ENCODE measurements at regions of chr6 and their contacts with region 1.

Region 1: GRCh38 chr6:125363039-125363823 is 61.5 kb upstream of the HDDC2 start:
- DNase-seq: peak; percentile 82
- H3K4me3 ChIP-seq: peak overlapping the region; percentile 40 to 56 (median 49)
- H3K27ac ChIP-seq: peak overlapping the region; percentile 57 to 87 (median 76)
- H3K4me1 ChIP-seq: peaks cover 0 to 33% (median 19%) of the 10 kb centered on the region in 4 donors
- H3K27me3 ChIP-seq: no peaks in the 10 kb centered on the region
- CTCF ChIP-seq: no peak
- EP300 ChIP-seq: no peak
- POLR2A ChIP-seq: no peak

Region 2: DNA sequence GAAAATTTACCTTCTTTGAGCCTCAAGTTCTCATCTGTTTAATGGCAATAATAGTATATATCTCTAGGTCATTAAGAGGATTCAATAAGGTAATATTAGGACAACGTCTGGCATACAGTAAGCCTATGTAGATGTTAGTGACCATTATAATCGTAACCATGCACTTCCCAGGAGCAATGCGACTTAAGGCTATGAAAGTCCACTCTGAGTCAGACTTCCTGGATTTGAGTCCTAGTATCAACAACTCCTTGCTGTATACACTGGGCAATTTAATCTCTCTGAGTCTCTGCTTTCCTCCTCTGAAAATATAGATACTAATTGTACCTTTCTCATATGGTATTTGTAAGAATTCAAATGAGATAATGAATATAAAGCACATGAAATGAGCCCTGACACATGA is 106.7 kb after region 1 on chr6:
- intact Hi-C with region 1: no loop called
- DNase-seq: no peak
- H3K4me3 ChIP-seq: no peak overlapping the region
- H3K27ac ChIP-seq: no peak overlapping the region
- H3K4me1 ChIP-seq: no peaks in the 10 kb centered on the region
- H3K27me3 ChIP-seq: no peaks in the 10 kb centered on the region
- CTCF ChIP-seq: no peak
- EP300 ChIP-seq: no peak
- POLR2A ChIP-seq: no peak

Region 3: DNA sequence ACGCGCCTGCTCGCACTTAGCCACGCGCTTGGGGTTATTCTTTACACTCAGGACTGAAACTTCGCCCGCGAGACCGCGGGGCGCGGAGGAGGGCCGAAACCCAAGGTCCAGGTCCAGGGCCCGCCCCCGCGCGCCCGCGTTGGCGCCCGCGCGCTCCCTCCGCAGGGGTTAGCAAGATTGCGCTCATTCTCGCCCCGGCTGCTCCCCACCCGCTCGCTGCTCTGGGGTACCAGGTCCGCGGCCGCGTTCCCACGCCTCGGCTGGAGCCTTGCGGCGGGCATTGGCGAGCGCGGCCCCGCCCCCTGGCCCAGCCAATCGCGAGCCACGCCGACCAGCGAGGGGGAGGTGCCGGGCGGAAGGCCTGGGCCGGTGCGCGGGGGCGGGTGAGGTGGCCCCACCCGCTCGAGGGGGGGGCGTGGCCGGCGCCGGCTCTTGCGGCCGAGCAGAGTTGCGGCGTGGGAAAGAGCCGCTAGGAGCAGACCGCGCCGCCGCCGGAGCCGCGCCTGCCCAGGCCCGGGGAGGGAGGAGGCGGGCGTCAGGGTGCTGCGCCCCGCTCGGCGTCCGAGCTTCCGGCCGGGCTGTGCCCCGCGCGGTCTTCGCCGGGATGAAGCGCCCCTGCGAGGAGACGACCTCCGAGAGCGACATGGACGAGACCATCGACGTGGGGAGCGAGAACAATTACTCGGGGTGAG is 386.1 kb after region 1 on chr6 and contains the start of gene HEY2:
- intact Hi-C with region 1: loop called (anchors 5 kb)
- DNase-seq: peak; percentile 96
- H3K4me3 ChIP-seq: peak within 1 kb of the TSS; percentile 53 to 74 (median 70)
- H3K27ac ChIP-seq: peak within 1 kb of the TSS; percentile 86 to 89 (median 88)
- H3K4me1 ChIP-seq: peaks cover 0 to 33% (median 21%) of the 10 kb centered on the region in 4 donors
- H3K27me3 ChIP-seq: peaks cover 0 to 44% (median 0%) of the 10 kb centered on the region in 3 donors
- CTCF ChIP-seq: peak in 1 of 4 experiments; percentile 28
- EP300 ChIP-seq: peak in 1 of 4 donors; percentile 40
- POLR2A ChIP-seq: peak in 1 of 2 donors; percentile 17
- total RNA-seq, gene HEY2: 1.3 to 3.9 (median 2.1) TPM